PC-3 (cell line): ENCODE measurements at regions of chr2 and their contacts with region 1.

Region 1: DNA sequence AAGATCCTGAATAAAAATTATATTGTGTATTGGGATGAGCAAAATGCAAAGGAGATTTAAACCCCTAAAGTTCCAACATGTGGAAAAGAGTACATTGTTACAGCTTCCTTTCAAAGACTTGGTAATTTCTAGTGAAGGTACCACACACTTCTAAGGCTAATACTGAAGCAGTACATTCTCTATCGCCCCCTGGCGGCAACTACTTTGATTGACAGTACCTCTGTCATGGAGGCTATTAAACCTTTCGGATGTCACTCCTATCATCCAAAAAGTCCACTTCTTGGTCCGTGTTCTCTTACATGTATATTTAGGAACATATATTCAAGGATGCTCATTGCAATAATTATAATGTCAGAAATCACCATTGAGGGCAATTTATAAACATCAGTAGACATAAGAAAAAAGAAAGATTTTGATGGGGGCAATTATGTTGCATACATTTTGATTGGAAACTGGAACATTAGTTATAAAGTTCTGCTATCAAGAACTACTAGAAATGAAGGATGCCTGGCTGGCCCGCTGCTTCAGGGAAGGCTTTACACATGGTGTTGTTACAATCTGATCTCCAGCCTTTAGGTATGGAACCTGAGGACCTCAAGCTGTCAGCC is 601.6 kb downstream of the CPS1 start:
- DNase-seq: peak; percentile 93
- ATAC-seq: peak; percentile 81
- H3K4me3 ChIP-seq: no peak overlapping the region
- H3K27ac ChIP-seq: no peak overlapping the region
- H3K4me1 ChIP-seq: peaks cover 12% of the 10 kb centered on the region; the same call in 1 of the 2 replicates
- H3K27me3 ChIP-seq: no peaks in the 10 kb centered on the region
- CTCF ChIP-seq: peak; percentile 95

Region 2: DNA sequence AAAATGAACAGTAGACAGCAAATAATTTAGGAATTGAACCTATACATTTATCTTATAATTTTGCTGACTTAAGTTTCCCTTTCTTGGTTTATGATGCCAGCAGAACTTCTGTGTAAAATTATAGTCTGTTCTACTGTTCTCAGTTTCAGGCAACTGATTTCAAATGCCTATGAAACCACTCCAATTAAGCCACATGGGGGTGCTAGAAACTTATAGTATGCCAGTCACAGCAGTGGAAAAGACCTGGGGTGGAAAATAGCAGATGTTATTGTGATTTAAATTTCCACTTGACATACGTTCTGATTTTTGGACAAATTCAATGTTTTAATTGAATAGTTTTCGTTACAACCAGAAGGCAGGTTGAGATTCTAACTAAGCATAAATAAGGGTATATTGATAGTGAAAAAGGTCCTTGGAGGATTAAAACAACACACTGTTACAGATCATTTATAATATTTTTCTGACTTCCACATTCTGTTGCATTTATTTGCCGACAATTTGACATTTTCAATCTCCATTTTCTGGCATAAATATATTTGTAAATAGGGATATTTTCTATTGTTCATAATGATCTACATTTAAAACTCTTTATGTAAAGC is 540.1 kb before region 1 on chr2:
- CTCF ChIA-PET with region 1: no interaction called
- POLR2A ChIA-PET with region 1: no interaction called
- intact Hi-C with region 1: loop called (anchors 1 kb)
- DNase-seq: peak; percentile 64
- ATAC-seq: peak; percentile 81
- H3K4me3 ChIP-seq: no peak overlapping the region
- H3K27ac ChIP-seq: no peak overlapping the region
- H3K4me1 ChIP-seq: no peaks in the 10 kb centered on the region
- H3K27me3 ChIP-seq: no peaks in the 10 kb centered on the region
- CTCF ChIP-seq: peak; percentile 87

Region 3: GRCh38 chr2:210663631-210664089 is 494.3 kb before region 1 on chr2:
- CTCF ChIA-PET with region 1: no interaction called
- POLR2A ChIA-PET with region 1: no interaction called
- intact Hi-C with region 1: loop called (anchors 5 kb)
- DNase-seq: peak; percentile 46
- ATAC-seq: peak; percentile 66
- H3K4me3 ChIP-seq: no peak overlapping the region
- H3K27ac ChIP-seq: no peak overlapping the region
- H3K4me1 ChIP-seq: no peaks in the 10 kb centered on the region
- H3K27me3 ChIP-seq: no peaks in the 10 kb centered on the region
- CTCF ChIP-seq: peak; percentile 63

Region 4: DNA sequence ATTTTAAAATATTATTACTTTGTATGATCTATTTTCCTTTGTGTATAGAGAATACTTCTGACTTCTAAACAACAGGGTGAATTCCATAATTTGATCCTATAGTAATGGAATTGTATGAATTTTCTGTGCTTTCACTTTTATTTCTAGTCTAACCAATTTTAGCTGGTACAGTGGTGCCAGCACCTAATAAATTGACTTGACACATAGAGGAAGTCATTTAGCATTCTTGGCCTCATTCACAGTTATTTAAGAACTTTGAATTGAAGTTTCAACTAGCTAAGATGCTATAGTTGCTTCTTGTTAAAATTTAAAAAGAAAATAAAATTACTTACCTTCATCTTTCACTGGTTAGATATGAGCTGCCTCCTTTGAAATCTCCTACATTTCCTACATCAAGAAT is 381.2 kb before region 1 on chr2:
- CTCF ChIA-PET with region 1: no interaction called
- POLR2A ChIA-PET with region 1: no interaction called
- intact Hi-C with region 1: no loop called
- DNase-seq: no peak
- ATAC-seq: no peak
- H3K4me3 ChIP-seq: no peak overlapping the region
- H3K27ac ChIP-seq: no peak overlapping the region
- H3K4me1 ChIP-seq: no peaks in the 10 kb centered on the region
- H3K27me3 ChIP-seq: peaks cover 10% of the 10 kb centered on the region; the same call in 1 of the 2 replicates
- CTCF ChIP-seq: no peak

Region 5: DNA sequence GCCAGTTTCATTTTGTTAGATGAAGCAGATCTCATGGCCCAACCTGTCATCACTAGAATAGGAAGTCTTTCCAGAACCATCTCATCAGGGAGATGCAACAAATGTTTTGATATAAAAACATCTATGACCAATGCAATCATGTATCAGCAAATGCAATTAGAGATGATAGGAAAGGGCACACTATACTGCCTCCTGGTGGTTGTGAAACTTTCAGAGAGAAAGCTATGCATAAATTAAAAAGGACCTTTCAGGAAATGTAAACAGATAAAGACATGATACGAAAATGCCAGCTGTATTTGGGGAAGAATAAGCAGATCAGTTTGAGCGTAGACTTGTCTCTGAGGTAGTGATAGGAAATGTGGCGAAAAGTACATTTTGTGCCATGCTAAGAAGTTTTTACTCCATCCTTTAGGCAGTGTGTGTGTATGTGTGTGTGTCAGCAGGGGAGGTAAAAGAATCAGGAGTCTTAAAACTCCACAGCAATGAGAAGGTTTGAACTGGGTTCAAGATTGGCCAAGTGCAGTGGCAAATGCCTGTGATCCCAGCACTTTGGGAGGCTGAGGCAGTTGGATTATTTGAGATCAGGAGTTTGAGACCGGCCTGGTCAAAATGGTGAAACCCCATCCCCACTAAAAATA is 122.3 kb before region 1 on chr2:
- CTCF ChIA-PET with region 1: no interaction called
- POLR2A ChIA-PET with region 1: no interaction called
- intact Hi-C with region 1: loop called (anchors 2 kb)
- DNase-seq: peak; percentile 72
- ATAC-seq: peak; percentile 27
- H3K4me3 ChIP-seq: no peak overlapping the region
- H3K27ac ChIP-seq: no peak overlapping the region
- H3K4me1 ChIP-seq: no peaks in the 10 kb centered on the region
- H3K27me3 ChIP-seq: peaks cover 13% of the 10 kb centered on the region; the same call in 1 of the 2 replicates
- CTCF ChIP-seq: peak; percentile 92

Region 6: GRCh38 chr2:211085056-211085680 is 72.8 kb before region 1 on chr2:
- CTCF ChIA-PET with region 1: interaction called, 14 read pairs
- POLR2A ChIA-PET with region 1: no interaction called
- intact Hi-C with region 1: loop called (anchors 1 kb)
- DNase-seq: peak; percentile 81
- ATAC-seq: peak; percentile 56
- H3K4me3 ChIP-seq: no peak overlapping the region
- H3K27ac ChIP-seq: no peak overlapping the region
- H3K4me1 ChIP-seq: no peaks in the 10 kb centered on the region
- H3K27me3 ChIP-seq: 0 out of 2 replicates have a peak, but pooled peaks cover 10% of the 10 kb centered on the region
- CTCF ChIP-seq: peak; percentile 89